IMR-90 (cell line): ENCODE measurements at regions of chr2 and their contacts with region 1.

Region 1: GRCh38 chr2:118607641-118608040 is 239.8 kb downstream of the EN1 start:
- DNase-seq: no peak
- ATAC-seq: no peak
- H3K4me3 ChIP-seq: no peak overlapping the region
- H3K27ac ChIP-seq: no peak overlapping the region
- H3K4me1 ChIP-seq: no peaks in the 10 kb centered on the region
- H3K27me3 ChIP-seq: no peaks in the 10 kb centered on the region
- CTCF ChIP-seq: no peak
- POLR2A ChIP-seq: no peak
- RAD21 ChIP-seq: no peak

Region 2: DNA sequence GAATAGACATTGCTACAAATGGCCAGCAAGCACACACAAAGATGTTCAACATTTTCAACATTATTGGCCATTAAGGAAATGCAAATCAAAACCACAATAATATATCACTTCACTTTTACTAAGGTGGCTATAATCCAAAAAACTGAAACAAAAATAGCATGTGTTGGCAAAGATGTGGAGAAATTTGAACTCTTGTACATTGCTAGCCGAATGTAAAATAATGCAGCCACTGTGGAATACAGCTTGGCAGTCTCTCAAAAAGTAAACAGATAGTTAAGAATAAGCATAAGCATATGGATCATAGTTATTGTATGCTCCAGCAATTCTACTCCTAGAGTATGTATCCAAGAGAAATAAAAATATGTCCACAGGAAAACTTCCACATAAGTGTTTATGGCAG is 47.3 kb after region 1 on chr2:
- CTCF ChIA-PET with region 1: no interaction called
- POLR2A ChIA-PET with region 1: no interaction called
- dilution Hi-C with region 1: no loop called
- in situ Hi-C with region 1: no loop called
- intact Hi-C with region 1: loop called (anchors 1 kb)
- DNase-seq: no peak
- ATAC-seq: no peak
- H3K4me3 ChIP-seq: no peak overlapping the region
- H3K27ac ChIP-seq: no peak overlapping the region
- H3K4me1 ChIP-seq: no peaks in the 10 kb centered on the region
- H3K27me3 ChIP-seq: no peaks in the 10 kb centered on the region; the same call in 1 of the 2 replicates
- CTCF ChIP-seq: no peak
- POLR2A ChIP-seq: no peak
- RAD21 ChIP-seq: no peak